Upper lobe of right lung (tissue), 1 donor: ENCODE measurements at regions of chr12 and their contacts with region 1.

Region 1: GRCh38 chr12:6825398-6826124 is 2.6 kb upstream of the P3H3 start:
- DNase-seq: peak; percentile 89
- ATAC-seq: peak; percentile 81
- H3K4me3 ChIP-seq: no peak overlapping the region
- H3K27ac ChIP-seq: no peak overlapping the region
- H3K4me1 ChIP-seq: peaks cover 9% of the 10 kb centered on the region
- H3K27me3 ChIP-seq: no peaks in the 10 kb centered on the region
- CTCF ChIP-seq: peak; percentile 94

Region 2: GRCh38 chr12:6520186-6520585 is 305.4 kb before region 1 on chr12:
- intact Hi-C with region 1: no loop called
- DNase-seq: no peak
- ATAC-seq: no peak
- H3K4me3 ChIP-seq: no peak overlapping the region
- H3K27ac ChIP-seq: no peak overlapping the region
- H3K4me1 ChIP-seq: no peaks in the 10 kb centered on the region
- H3K27me3 ChIP-seq: no peaks in the 10 kb centered on the region
- CTCF ChIP-seq: no peak

Region 3: GRCh38 chr12:6735448-6736191 is 89.9 kb before region 1 on chr12:
- intact Hi-C with region 1: loop called (anchors 10 kb)
- DNase-seq: peak; percentile 83
- ATAC-seq: peak; percentile 94
- H3K4me3 ChIP-seq: no peak overlapping the region
- H3K27ac ChIP-seq: no peak overlapping the region
- H3K4me1 ChIP-seq: no peaks in the 10 kb centered on the region
- H3K27me3 ChIP-seq: no peaks in the 10 kb centered on the region
- CTCF ChIP-seq: peak; percentile 77

Region 4: GRCh38 chr12:7155481-7156034 is 330.0 kb after region 1 on chr12:
- intact Hi-C with region 1: no loop called
- DNase-seq: peak; percentile 93
- ATAC-seq: peak; percentile 81
- H3K4me3 ChIP-seq: peak overlapping the region; percentile 39
- H3K27ac ChIP-seq: peak overlapping the region; percentile 63
- H3K4me1 ChIP-seq: peaks cover 6% of the 10 kb centered on the region
- H3K27me3 ChIP-seq: no peaks in the 10 kb centered on the region
- CTCF ChIP-seq: no peak